ENCODE measurements at regions of chr3 and their contacts with region 1.

Region 1: GRCh38 chr3:41224120-41224806 is 25.0 kb downstream of the CTNNB1 start:
- DNase-seq: peak in 1 of 2 donors; percentile 20
- ATAC-seq: peak; percentile 97 to 98
- H3K4me3 ChIP-seq: no peak overlapping the region
- H3K27ac ChIP-seq: peak overlapping the region; percentile 36 to 50 (median 47)
- H3K4me1 ChIP-seq: peaks cover 46 to 64% of the 10 kb centered on the region in 2 donors
- H3K27me3 ChIP-seq: no peaks in the 10 kb centered on the region
- CTCF ChIP-seq: peak in 1 of 5 experiments; percentile 20
- POLR2A ChIP-seq: no peak

Region 2: GRCh38 chr3:41207355-41207754 is 16.9 kb before region 1 on chr3:
- in situ Hi-C with region 1: no loop called
- intact Hi-C with region 1: loop called (anchors 2 kb)
- DNase-seq: no peak
- ATAC-seq: no peak
- H3K4me3 ChIP-seq: no peak overlapping the region
- H3K27ac ChIP-seq: no peak overlapping the region
- H3K4me1 ChIP-seq: peaks cover 68 to 75% of the 10 kb centered on the region in 2 donors
- H3K27me3 ChIP-seq: no peaks in the 10 kb centered on the region
- CTCF ChIP-seq: no peak
- POLR2A ChIP-seq: no peak

Region 3: DNA sequence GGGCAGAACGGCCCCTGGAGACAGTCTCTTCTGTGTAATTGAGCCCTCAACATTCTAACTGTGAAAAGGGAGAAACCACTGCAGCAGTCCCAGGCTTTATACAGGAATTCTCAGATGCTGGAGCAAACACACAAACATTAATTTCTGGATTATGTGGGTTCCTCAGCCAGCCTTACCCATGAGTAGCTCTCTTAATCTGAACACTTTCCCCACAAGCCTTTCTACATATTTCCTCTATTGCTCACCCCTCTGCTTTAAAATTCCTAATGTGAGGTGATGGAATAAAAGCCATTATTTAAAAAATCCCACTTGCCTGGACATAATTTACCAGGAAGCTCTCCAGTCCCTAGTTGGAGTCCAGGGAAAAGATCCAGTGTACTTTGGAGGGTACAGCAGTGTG is 114.0 kb after region 1 on chr3:
- in situ Hi-C with region 1: no loop called
- intact Hi-C with region 1: no loop called
- DNase-seq: no peak
- ATAC-seq: no peak
- H3K4me3 ChIP-seq: no peak overlapping the region
- H3K27ac ChIP-seq: no peak overlapping the region
- H3K4me1 ChIP-seq: no peaks in the 10 kb centered on the region
- H3K27me3 ChIP-seq: no peaks in the 10 kb centered on the region
- CTCF ChIP-seq: no peak
- POLR2A ChIP-seq: no peak